ENCODE measurements at regions of chr5 and their contacts with region 1.

Region 1: DNA sequence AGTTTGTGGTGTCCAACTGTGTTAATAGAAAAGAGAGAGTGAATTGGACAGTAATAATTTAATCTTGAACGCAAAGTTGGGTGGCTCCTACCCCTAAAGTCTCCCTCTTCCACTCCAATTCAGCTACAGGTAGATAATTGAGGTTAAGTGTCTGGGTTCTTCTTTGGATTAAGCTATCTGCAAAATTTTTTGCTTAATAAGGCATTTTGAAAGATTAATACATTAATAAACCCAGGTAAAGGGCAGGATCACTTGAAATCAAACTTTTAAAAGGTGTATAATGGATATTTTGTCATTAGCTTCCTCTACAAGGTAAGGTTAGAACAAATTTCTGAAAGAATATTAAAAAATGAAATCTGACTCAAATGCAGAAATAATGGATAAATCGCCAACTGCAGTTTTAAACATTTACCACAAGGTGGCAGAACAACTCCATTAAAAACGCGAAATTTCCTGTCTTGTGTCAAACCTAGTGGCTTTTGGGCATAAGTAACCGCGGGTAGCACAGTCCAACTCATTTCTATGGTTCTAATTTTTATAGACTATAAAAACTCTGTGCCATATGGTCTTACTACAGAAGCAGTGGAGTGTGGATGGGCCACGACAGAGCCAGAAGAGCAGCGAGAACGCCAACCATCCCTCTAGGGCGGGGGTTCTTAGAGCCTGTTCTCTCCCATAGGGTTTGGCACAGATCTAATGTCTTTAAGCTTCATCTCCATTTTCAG is 276.5 kb downstream of the ARHGEF28 start:
- DNase-seq: peak; percentile 26 to 40
- H3K4me3 ChIP-seq: no peak overlapping the region
- H3K4me1 ChIP-seq: no peaks in the 10 kb centered on the region
- H3K27me3 ChIP-seq: peaks cover 29% of the 10 kb centered on the region

Region 2: GRCh38 chr5:74009502-74009901 is 107.0 kb after region 1 on chr5:
- in situ Hi-C with region 1: no loop called
- DNase-seq: no peak
- H3K4me3 ChIP-seq: no peak overlapping the region
- H3K4me1 ChIP-seq: no peaks in the 10 kb centered on the region
- H3K27me3 ChIP-seq: no peaks in the 10 kb centered on the region

Region 3: DNA sequence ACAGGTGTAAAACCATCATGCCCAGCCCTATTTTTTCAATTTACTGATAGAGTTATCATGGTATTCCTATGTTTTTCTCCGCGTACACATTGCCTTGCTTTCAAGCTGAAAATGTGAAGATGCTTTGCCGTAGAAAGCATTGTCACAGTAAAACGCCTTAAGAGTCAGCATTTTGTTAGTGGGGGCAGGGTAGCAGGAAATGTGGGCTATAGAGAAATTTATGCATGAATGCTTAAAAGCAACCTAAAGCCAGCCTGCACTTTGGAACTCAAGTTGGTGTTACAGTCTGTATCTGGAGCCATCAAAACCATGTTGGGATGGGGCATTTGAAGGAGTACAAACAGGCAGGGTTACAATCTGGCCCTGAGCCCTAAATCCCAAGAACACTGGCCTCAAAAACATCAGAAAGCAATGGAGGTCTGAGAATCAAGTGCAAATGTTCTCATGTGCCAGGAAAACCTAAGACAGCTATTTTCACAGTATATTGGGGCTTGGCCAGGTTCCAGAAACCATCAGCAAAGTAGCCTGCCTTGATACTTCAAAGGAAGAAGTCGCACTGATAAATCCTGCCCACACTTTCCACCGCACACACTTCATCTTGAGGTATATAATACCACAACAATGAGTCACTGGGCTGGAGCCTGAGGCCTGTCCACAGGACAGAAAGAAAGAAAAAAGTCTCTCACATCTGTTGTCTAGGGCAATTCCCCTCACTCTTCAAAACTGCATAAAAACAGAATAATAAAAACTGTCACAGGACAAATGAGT is 424.3 kb after region 1 on chr5:
- in situ Hi-C with region 1: no loop called
- DNase-seq: no peak
- H3K4me3 ChIP-seq: no peak overlapping the region
- H3K4me1 ChIP-seq: no peaks in the 10 kb centered on the region
- H3K27me3 ChIP-seq: no peaks in the 10 kb centered on the region

Region 4: GRCh38 chr5:74648835-74649293 is 746.4 kb after region 1 on chr5:
- in situ Hi-C with region 1: loop called (anchors 5 kb)
- DNase-seq: peak; percentile 47 to 68
- H3K4me3 ChIP-seq: no peak overlapping the region
- H3K4me1 ChIP-seq: peaks cover 3% of the 10 kb centered on the region; the same call in 1 of the 2 replicates
- H3K27me3 ChIP-seq: no peaks in the 10 kb centered on the region